ENCODE measurements at regions of chr4 and their contacts with region 1.

Region 1: GRCh38 chr4:140861359-140862176 is 105.4 kb upstream of the TBC1D9 start:
- DNase-seq: peak; percentile 74
- ATAC-seq: peak; percentile 56
- H3K4me3 ChIP-seq: no peak overlapping the region
- H3K27ac ChIP-seq: no peak overlapping the region
- H3K4me1 ChIP-seq: peaks cover 3 to 12% of the 10 kb centered on the region in 2 experiments; a peak in 3 of 4 replicates
- H3K27me3 ChIP-seq: no peaks in the 10 kb centered on the region
- CTCF ChIP-seq: peak; percentile 70 to 82 (median 70); a peak in 5 of 6 replicates
- POLR2A ChIP-seq: no peak
- RAD21 ChIP-seq: peak; percentile 90

Region 2: DNA sequence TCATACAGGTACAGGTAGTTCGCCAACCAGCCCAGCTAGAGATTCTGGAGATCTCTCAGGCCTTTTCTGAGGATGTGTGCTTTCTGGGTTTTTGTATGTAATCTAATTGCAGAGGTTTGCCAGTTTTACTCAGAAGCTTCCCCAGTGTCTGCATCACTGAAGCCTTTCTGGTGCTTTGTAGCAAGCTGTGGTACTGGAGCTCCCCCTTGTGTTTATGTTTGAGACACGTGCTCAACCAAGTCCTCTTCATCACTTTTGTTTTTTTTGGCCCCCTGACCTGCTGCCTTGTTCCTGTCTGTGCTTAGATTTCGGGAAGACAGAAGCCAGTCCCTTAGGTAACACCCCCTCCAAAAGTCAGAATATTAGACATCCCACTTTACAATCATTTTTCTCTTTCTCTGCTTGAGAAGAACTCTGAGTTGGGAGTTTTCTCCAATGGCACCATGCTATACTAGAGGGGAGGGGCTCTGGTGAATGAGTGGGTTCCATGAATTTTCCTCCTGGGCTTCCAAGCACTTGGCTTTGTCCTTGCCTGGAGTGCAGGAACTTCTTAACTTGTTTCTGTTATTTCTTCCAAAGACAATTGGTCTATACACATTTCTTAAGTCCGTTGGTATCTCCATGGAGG is 23.0 kb after region 1 on chr4:
- CTCF ChIA-PET with region 1: interaction called, 10 read pairs
- POLR2A ChIA-PET with region 1: no interaction called
- RAD21 ChIA-PET with region 1: no interaction called
- intact Hi-C with region 1: loop called (anchors 1 kb)
- DNase-seq: peak; percentile 71
- ATAC-seq: peak; percentile 96
- H3K4me3 ChIP-seq: no peak overlapping the region
- H3K27ac ChIP-seq: no peak overlapping the region
- H3K4me1 ChIP-seq: no peaks in the 10 kb centered on the region
- H3K27me3 ChIP-seq: peaks cover 4% of the 10 kb centered on the region; the same call in 1 of the 2 replicates
- CTCF ChIP-seq: peak; percentile 72 to 80 (median 78)
- POLR2A ChIP-seq: no peak
- RAD21 ChIP-seq: peak; percentile 89

Region 3: DNA sequence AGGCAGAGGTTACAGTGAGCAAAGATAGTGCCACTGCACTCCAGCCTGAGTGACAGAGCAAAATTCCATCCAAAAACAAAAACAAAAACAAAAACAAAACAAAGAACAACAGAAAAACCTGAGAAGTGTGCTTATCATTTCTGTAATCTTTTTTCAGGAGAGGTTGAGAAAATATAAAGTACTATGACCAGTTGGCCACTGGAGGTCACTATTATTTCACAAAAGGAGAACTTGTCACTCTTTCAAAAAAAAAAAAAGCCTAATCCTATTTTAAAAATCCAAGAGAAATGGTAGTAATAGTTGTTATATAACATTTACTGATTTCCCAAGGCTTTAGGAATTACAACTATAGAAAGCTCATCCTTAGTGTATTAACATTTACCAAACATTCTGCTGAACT is 296.7 kb after region 1 on chr4:
- CTCF ChIA-PET with region 1: no interaction called
- POLR2A ChIA-PET with region 1: no interaction called
- RAD21 ChIA-PET with region 1: no interaction called
- intact Hi-C with region 1: loop called (anchors 2 kb)
- DNase-seq: peak; percentile 33
- ATAC-seq: no peak
- H3K4me3 ChIP-seq: no peak overlapping the region
- H3K27ac ChIP-seq: no peak overlapping the region
- H3K4me1 ChIP-seq: no peaks in the 10 kb centered on the region
- H3K27me3 ChIP-seq: no peaks in the 10 kb centered on the region
- CTCF ChIP-seq: peak; percentile 23 to 67 (median 43); a peak in 4 of 6 replicates
- POLR2A ChIP-seq: no peak
- RAD21 ChIP-seq: peak; percentile 71

Region 4: GRCh38 chr4:141229408-141230101 is 368.0 kb after region 1 on chr4:
- CTCF ChIA-PET with region 1: no interaction called
- POLR2A ChIA-PET with region 1: no interaction called
- RAD21 ChIA-PET with region 1: no interaction called
- intact Hi-C with region 1: no loop called
- DNase-seq: no peak
- ATAC-seq: no peak
- H3K4me3 ChIP-seq: no peak overlapping the region
- H3K27ac ChIP-seq: no peak overlapping the region
- H3K4me1 ChIP-seq: no peaks in the 10 kb centered on the region
- H3K27me3 ChIP-seq: no peaks in the 10 kb centered on the region
- CTCF ChIP-seq: no peak
- POLR2A ChIP-seq: no peak
- RAD21 ChIP-seq: no peak